Activated CD4-positive, alpha-beta memory T cell treated with anti-CD3 and anti-CD28 coated beads for 36 hours (primary cell): ENCODE measurements at regions of chr2 and their contacts with region 1.

Region 1: GRCh38 chr2:63588385-63589147 is at the starts of genes MDH1 and WDPCP:
- DNase-seq: peak; percentile 97
- H3K4me3 Mint-ChIP-seq: peak within 1 kb of the TSS; percentile 99
- H3K27ac Mint-ChIP-seq: peak within 1 kb of the TSS; percentile 92
- H3K4me1 Mint-ChIP-seq: peaks cover 35% of the 10 kb centered on the region
- H3K27me3 Mint-ChIP-seq: no peaks in the 10 kb centered on the region
- total RNA-seq, gene MDH1: 261 to 268 TPM
- total RNA-seq, gene WDPCP: 4.4 to 5.0 TPM

Region 2: GRCh38 chr2:62306751-62307468 is 1281.7 kb before region 1 on chr2:
- CTCF ChIA-PET with region 1: no interaction called
- POLR2A ChIA-PET with region 1: no interaction called
- intact Hi-C with region 1: loop called (anchors 10 kb)
- DNase-seq: peak; percentile 73
- H3K4me3 Mint-ChIP-seq: peak overlapping the region; percentile 22
- H3K27ac Mint-ChIP-seq: peak overlapping the region; percentile 72
- H3K4me1 Mint-ChIP-seq: peaks cover 75% of the 10 kb centered on the region
- H3K27me3 Mint-ChIP-seq: no peaks in the 10 kb centered on the region

Region 3: GRCh38 chr2:63614448-63614968 is 25.9 kb after region 1 on chr2:
- CTCF ChIA-PET with region 1: no interaction called
- POLR2A ChIA-PET with region 1: no interaction called
- intact Hi-C with region 1: no loop called
- DNase-seq: no peak
- H3K4me3 Mint-ChIP-seq: no peak overlapping the region
- H3K27ac Mint-ChIP-seq: no peak overlapping the region
- H3K4me1 Mint-ChIP-seq: no peaks in the 10 kb centered on the region
- H3K27me3 Mint-ChIP-seq: peaks cover 6% of the 10 kb centered on the region

Region 4: DNA sequence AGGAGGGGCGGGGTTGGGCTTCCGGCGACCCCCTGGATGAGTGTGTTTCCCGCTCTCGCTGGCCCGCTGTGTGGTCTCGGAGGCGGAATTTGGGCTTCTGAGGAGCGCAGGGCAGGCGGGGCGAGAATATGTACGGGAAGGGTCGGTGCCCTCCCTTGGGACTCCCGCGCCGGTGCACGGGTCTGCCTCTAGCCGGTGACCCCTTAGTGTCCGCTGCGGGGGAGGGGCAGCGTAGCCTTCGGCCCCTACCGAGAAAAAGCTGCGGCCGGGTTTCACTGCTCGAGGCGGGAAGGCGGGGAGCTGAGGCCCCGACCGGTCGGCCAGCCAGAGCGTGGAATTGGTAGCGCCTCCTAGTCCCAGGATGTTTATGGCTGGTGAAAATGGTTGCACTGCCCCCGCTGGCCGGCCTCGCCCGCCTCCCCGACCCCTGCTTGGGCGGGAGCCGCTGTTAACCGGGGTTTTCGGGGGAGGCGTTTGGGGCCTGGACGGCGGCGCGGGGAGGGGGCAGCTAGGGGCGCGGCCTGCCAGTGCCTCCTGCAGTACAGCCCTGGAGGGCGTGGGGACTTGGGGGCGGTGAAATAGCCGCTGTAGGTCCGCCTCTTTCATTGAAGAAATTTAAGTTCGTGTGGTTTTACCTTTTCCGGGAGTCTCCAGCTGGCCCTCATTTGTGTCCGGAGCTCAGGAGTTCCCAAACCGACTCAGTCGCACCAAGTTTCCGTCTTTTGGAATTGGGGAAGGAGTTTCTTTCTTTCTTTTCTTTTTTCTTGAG is 252.9 kb after region 1 on chr2 and contains the start of gene UGP2:
- CTCF ChIA-PET with region 1: no interaction called
- POLR2A ChIA-PET with region 1: interaction called, 23 read pairs
- intact Hi-C with region 1: loop called (anchors 1 kb)
- DNase-seq: peak; percentile 91
- H3K4me3 Mint-ChIP-seq: peak within 1 kb of the TSS; percentile 99
- H3K27ac Mint-ChIP-seq: peak within 1 kb of the TSS; percentile 100
- H3K4me1 Mint-ChIP-seq: peaks cover 44% of the 10 kb centered on the region
- H3K27me3 Mint-ChIP-seq: no peaks in the 10 kb centered on the region
- total RNA-seq, gene UGP2: 113 to 119 TPM

Region 5: GRCh38 chr2:64018923-64019718 is 430.6 kb after region 1 on chr2 and contains the start of gene VPS54:
- CTCF ChIA-PET with region 1: no interaction called
- POLR2A ChIA-PET with region 1: no interaction called
- intact Hi-C with region 1: loop called (anchors 5 kb)
- DNase-seq: peak; percentile 63
- H3K4me3 Mint-ChIP-seq: peak within 1 kb of the TSS; percentile 98
- H3K27ac Mint-ChIP-seq: peak within 1 kb of the TSS; percentile 93
- H3K4me1 Mint-ChIP-seq: peaks cover 41% of the 10 kb centered on the region
- H3K27me3 Mint-ChIP-seq: no peaks in the 10 kb centered on the region
- total RNA-seq, gene VPS54: 12.5 to 12.8 TPM

Region 6: DNA sequence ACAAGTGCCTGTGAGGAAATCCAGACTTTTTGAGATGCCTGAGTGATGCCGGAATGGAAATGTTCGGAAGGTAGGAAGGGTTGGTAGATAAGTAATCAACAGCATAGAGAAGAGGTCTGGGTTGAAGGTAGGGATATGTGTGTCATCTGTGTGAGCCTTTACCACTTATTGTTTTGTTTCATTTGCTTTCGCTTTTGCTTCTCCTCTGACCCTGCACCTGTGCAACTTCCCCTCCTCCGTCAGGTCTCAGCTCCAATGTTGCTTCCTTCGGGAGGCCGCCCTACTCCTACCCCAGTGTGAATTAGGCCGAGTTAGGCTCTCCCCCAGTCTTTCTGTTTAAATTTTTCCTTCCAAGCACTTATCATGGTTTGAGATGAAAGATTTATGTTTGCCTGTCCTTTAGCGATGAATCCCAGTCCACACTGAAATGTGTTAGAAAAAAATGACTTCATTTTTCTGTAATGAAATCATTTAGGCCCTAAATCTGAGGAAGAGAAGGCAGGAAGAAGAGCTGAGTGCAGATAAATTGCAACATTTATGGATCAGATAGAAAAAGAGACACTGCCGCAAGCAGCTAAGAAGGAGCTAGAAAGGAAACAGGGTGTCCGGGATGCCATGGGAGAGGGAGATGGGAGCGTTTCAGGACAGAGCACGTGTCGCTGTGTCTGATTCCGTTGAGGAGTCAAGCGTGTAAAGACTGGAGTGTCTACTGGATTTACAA is 695.2 kb after region 1 on chr2:
- CTCF ChIA-PET with region 1: no interaction called
- POLR2A ChIA-PET with region 1: no interaction called
- intact Hi-C with region 1: loop called (anchors 5 kb)
- DNase-seq: peak; percentile 38
- H3K4me3 Mint-ChIP-seq: no peak overlapping the region
- H3K27ac Mint-ChIP-seq: no peak overlapping the region
- H3K4me1 Mint-ChIP-seq: no peaks in the 10 kb centered on the region
- H3K27me3 Mint-ChIP-seq: no peaks in the 10 kb centered on the region